ENCODE measurements at regions of chr4 and their contacts with region 1.

Region 1: GRCh38 chr4:104860238-104861123 is 286.2 kb upstream of the TET2 start:
- DNase-seq: peak in 1 of 2 donors; percentile 54
- ATAC-seq: peak; percentile 55 to 86 (median 74)
- H3K4me3 ChIP-seq: peak overlapping the region in 4 of 10 donors; percentile 20 to 39 (median 30)
- H3K27ac ChIP-seq: peak overlapping the region in 1 of 10 donors; percentile 9
- H3K4me1 ChIP-seq: no peaks in the 10 kb centered on the region
- H3K27me3 ChIP-seq: peaks cover 0 to 3% (median 0%) of the 10 kb centered on the region in 7 donors
- CTCF ChIP-seq: peak; percentile 75 to 91 (median 88)

Region 2: GRCh38 chr4:103996637-103997036 is 863.8 kb before region 1 on chr4:
- intact Hi-C with region 1: loop called in 1 of 10 experiments (anchors 10 kb)
- DNase-seq: no peak
- ATAC-seq: no peak
- H3K4me3 ChIP-seq: no peak overlapping the region
- H3K27ac ChIP-seq: no peak overlapping the region
- H3K4me1 ChIP-seq: peaks cover 0 to 7% (median 0%) of the 10 kb centered on the region in 9 donors
- H3K27me3 ChIP-seq: no peaks in the 10 kb centered on the region
- CTCF ChIP-seq: no peak

Region 3: GRCh38 chr4:104015680-104016253 is 844.7 kb before region 1 on chr4:
- intact Hi-C with region 1: loop called in 1 of 10 experiments (anchors 5 kb)
- DNase-seq: no peak
- ATAC-seq: no peak
- H3K4me3 ChIP-seq: no peak overlapping the region
- H3K27ac ChIP-seq: no peak overlapping the region
- H3K4me1 ChIP-seq: no peaks in the 10 kb centered on the region
- H3K27me3 ChIP-seq: no peaks in the 10 kb centered on the region
- CTCF ChIP-seq: peak in 6 of 9 donors; percentile 26 to 51 (median 40)

Region 4: GRCh38 chr4:104064646-104065577 is 795.6 kb before region 1 on chr4:
- intact Hi-C with region 1: loop called in 8 of 10 experiments (anchors 5 to 10 kb)
- DNase-seq: peak; percentile 7 to 20
- ATAC-seq: peak in 5 of 8 donors; percentile 33 to 74 (median 54)
- H3K4me3 ChIP-seq: no peak overlapping the region
- H3K27ac ChIP-seq: no peak overlapping the region
- H3K4me1 ChIP-seq: no peaks in the 10 kb centered on the region
- H3K27me3 ChIP-seq: no peaks in the 10 kb centered on the region
- CTCF ChIP-seq: peak in 8 of 9 donors; percentile 14 to 66 (median 50)

Region 5: DNA sequence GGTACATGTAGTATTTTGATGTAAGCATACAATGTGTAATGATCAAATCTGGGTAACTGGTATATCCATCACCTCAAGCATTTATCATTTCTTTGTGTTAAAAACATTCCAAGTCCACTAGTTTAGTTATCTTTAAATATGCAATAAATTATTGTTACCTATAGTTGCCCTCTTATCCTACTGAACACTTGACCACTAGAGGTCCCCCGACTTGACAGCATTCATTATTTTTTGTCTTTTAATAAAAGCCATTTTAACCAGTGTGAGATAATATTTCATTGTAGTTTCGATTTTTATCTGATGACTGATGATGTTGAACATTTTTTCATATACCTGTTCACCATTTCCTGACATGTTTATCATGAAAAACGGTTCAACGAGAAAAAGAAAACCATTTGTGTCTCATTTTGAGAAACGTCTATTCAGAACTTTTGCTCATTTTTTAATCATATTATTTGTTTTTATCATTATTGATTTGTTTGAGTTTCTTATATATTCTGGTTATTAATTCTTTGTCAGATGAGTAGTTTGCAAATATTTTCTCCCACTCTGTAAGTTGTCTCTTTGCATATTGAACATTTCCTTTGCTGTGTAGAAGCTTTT is 166.8 kb before region 1 on chr4:
- intact Hi-C with region 1: loop called in 5 of 10 experiments (anchors 5 to 10 kb)
- DNase-seq: no peak
- ATAC-seq: no peak
- H3K4me3 ChIP-seq: no peak overlapping the region
- H3K27ac ChIP-seq: no peak overlapping the region
- H3K4me1 ChIP-seq: no peaks in the 10 kb centered on the region
- H3K27me3 ChIP-seq: no peaks in the 10 kb centered on the region
- CTCF ChIP-seq: peak in 6 of 9 donors; percentile 37 to 50 (median 46)

Region 6: DNA sequence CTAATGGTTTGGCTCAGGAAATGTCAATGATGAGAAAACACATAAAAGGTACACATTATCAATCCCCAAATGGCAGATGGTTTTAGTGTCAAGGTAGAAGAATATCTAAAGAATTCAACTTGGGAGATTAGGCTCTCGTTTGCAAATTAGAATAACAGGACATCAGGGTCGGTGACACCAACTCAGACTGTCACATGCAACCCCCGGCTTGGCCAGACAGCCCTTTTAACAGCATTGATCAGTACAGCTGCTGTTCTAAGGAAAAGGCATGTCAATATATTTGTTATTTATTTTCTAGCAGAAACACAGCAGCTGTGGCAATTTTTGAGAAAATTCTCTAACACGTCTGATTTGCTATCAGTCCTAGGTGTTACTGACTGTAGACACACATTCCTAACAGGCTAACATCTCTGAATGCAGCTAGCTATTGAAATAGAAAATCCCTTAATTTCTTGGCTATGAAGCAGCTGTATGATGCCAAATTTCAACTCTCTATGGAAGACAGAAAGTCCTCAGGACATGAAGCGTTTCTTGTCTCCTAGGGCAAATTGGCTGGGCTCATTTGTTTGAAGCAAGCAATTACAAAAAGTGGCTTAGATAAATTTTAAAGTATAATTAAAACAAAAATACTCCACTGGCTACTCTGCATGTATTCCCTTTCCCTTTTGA is 96.8 kb before region 1 on chr4:
- intact Hi-C with region 1: no loop called
- DNase-seq: no peak
- ATAC-seq: peak in 5 of 8 donors; percentile 23 to 65 (median 53)
- H3K4me3 ChIP-seq: no peak overlapping the region
- H3K27ac ChIP-seq: peak overlapping the region in 6 of 10 donors; percentile 0 to 45 (median 34)
- H3K4me1 ChIP-seq: peaks cover 0 to 18% (median 9%) of the 10 kb centered on the region in 9 donors
- H3K27me3 ChIP-seq: no peaks in the 10 kb centered on the region
- CTCF ChIP-seq: no peak